ENCODE measurements at regions of chr11 and their contacts with region 1.

Region 1: DNA sequence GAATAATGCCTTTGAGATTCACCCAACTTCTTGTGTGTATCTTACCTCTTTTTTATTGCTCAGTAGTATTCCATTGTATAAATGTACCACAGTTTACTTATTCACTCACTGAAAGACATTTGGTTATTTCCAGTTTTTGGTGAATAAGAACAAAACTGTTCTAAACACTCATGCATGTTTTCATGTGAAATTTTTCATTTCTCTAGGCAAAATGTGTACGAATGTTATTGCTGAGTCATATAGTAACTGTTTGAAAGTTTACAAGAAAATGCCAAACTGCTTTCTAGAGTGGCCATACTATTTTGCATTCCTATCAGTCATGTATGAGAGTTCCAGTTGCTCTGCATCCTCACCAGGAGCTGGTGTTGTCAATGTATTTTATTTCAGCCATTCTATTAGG is 8.8 kb upstream of the EMSY start:
- DNase-seq: no peak
- ATAC-seq: no peak
- H3K4me3 ChIP-seq: no peak overlapping the region
- H3K4me3 Mint-ChIP-seq: no peak overlapping the region
- H3K27ac ChIP-seq: no peak overlapping the region
- H3K27ac Mint-ChIP-seq: no peak overlapping the region
- H3K4me1 ChIP-seq: no peaks in the 10 kb centered on the region
- H3K4me1 Mint-ChIP-seq: no peaks in the 10 kb centered on the region
- H3K27me3 ChIP-seq: no peaks in the 10 kb centered on the region
- H3K27me3 Mint-ChIP-seq: no peaks in the 10 kb centered on the region
- CTCF ChIP-seq: no peak

Region 2: DNA sequence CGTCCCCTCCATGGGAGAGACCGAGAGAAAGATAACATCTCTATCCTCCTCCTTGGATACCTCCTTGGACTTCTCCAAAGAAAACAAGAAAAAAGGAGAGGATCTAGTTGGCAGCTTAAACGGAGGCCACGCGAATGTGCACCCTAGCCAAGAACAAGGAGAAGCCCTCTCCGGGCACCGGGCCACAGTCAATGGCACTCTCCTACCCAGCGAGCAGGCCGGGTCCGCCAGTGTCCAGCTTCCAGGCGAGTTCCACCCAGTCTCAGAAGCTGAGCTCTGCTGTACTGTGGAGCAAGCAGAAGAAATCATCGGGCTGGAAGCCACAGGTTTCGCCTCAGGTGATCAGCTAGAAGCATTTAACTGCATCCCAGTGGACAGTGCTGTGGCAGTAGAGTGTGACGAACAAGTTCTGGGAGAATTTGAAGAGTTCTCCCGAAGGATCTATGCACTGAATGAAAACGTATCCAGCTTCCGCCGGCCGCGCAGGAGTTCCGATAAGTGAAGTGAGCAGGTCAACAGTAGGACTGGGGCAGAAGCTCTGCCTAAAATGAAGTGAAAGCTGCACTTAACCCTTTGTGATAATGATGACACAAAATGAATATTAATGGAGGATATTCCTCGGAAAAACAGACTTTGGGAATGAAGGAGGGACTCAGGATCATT is 295.0 kb before region 1 on chr11:
- intact Hi-C with region 1: no loop called
- DNase-seq: no peak
- ATAC-seq: no peak
- H3K4me3 ChIP-seq: no peak overlapping the region
- H3K4me3 Mint-ChIP-seq: no peak overlapping the region
- H3K27ac ChIP-seq: no peak overlapping the region
- H3K27ac Mint-ChIP-seq: no peak overlapping the region
- H3K4me1 ChIP-seq: peaks cover 4% of the 10 kb centered on the region
- H3K4me1 Mint-ChIP-seq: peaks cover 0 to 10% of the 10 kb centered on the region in 2 donors
- H3K27me3 ChIP-seq: no peaks in the 10 kb centered on the region
- H3K27me3 Mint-ChIP-seq: no peaks in the 10 kb centered on the region
- CTCF ChIP-seq: no peak

Region 3: DNA sequence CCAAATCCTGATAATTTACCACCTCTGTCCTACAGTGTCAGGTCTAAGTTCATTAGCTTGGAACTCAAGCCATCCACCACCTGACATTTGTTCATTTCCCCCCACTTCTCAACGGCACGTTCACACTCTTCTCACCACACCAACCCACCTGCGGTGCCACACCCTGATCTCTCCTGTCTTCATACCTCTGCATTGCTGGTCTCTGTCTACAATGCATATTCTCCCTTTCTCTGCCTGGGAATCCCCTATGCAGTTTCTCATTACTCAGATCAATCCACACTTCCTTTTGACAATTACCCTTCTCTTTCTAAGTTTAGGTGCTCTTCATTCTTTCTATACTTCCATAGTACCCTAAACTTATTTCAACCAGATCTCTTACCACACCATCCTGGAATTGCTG is 11.6 kb before region 1 on chr11:
- intact Hi-C with region 1: loop called (anchors 1 kb)
- DNase-seq: no peak
- ATAC-seq: no peak
- H3K4me3 ChIP-seq: no peak overlapping the region
- H3K4me3 Mint-ChIP-seq: no peak overlapping the region
- H3K27ac ChIP-seq: no peak overlapping the region
- H3K27ac Mint-ChIP-seq: no peak overlapping the region
- H3K4me1 ChIP-seq: no peaks in the 10 kb centered on the region
- H3K4me1 Mint-ChIP-seq: no peaks in the 10 kb centered on the region
- H3K27me3 ChIP-seq: no peaks in the 10 kb centered on the region
- H3K27me3 Mint-ChIP-seq: peaks cover 0 to 11% of the 10 kb centered on the region in 2 donors
- CTCF ChIP-seq: no peak

Measured in natural killer cell (primary cell).